Lower leg skin (tissue), 4 donors: ENCODE measurements at regions of chr2 and their contacts with region 1.

Region 1: GRCh38 chr2:64414736-64415435 is 39.1 kb upstream of the LGALSL start:
- DNase-seq: no peak
- H3K4me3 ChIP-seq: no peak overlapping the region
- CTCF ChIP-seq: no peak
- POLR2A ChIP-seq: no peak

Region 2: DNA sequence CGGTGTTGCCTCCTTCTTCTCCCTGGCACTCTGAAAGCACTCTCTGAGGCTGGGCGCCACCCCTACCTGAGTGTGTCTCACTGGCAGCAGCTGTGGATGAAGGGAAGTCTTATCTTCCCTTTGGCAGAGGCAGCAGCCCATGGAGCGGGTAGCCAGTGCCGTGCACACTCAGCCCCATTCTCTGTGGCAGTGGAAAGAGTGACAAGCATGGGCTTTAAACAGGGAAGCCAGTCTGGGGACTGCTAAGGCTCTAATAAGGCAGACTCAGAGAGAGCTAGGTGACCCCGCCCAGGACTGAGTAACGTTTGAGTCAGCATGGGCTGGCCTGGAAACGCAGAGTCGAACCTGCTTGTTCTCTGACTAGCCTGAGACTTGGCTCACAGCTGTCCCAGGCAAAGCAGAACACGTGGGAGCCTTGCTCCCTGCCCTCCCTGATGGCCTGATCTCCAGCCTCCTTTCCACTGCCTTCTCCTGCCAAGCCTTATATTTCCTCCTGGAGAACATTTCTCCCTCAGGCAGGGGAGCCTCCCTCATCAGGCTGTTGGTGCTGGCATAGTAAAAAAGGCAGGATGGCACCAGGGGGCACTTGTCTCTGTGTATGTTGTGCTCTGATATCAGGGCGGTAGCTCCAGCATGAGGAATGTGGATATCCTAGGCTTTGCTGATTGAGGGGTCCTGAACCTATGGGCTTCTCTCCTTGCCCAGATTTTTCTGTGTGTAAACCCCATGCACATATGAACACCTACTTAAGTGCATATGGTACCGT is 54.8 kb before region 1 on chr2:
- intact Hi-C with region 1: no loop called
- DNase-seq: peak; percentile 92 to 94
- H3K4me3 ChIP-seq: no peak overlapping the region
- CTCF ChIP-seq: no peak
- POLR2A ChIP-seq: no peak

Region 3: GRCh38 chr2:64666810-64667438 is 252.0 kb after region 1 on chr2:
- intact Hi-C with region 1: no loop called
- DNase-seq: no peak
- H3K4me3 ChIP-seq: no peak overlapping the region
- CTCF ChIP-seq: no peak
- POLR2A ChIP-seq: no peak

Region 4: DNA sequence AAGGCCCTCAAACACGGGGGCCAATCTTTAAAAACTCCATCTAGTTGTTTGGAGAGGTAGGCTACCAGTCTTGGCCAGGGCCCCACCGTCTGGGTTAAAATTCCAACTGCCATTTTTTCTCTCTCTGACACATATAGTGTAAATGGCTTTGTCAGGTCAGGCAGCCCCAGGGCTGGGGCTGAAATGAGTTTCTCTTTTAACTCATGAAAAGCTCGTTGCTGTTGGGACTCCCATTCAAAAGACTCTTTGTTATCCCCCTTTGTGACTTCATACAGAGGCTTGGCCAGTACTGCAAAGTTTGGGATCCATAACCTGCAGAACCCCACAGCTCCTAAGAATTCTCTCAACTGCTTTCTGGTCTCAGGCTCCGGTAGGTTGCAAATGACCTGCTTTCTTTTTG is 474.9 kb after region 1 on chr2:
- intact Hi-C with region 1: loop called (anchors 5 kb)
- DNase-seq: peak in 1 of 2 donors; percentile 74
- H3K4me3 ChIP-seq: no peak overlapping the region
- CTCF ChIP-seq: no peak
- POLR2A ChIP-seq: no peak